PC-3 (cell line): ENCODE measurements at regions of chr5 and their contacts with region 1.

Region 1: GRCh38 chr5:87121304-87122150 is 146.2 kb upstream of the RASA1 start:
- DNase-seq: peak; percentile 96
- ATAC-seq: peak; percentile 80
- H3K4me3 ChIP-seq: peak overlapping the region; percentile 38; the same call in 1 of the 2 replicates
- H3K27ac ChIP-seq: peak overlapping the region; percentile 71
- H3K4me1 ChIP-seq: peaks cover 57% of the 10 kb centered on the region
- H3K27me3 ChIP-seq: no peaks in the 10 kb centered on the region
- CTCF ChIP-seq: no peak

Region 2: GRCh38 chr5:86831128-86831527 is 290.4 kb before region 1 on chr5:
- CTCF ChIA-PET with region 1: no interaction called
- POLR2A ChIA-PET with region 1: no interaction called
- intact Hi-C with region 1: no loop called
- DNase-seq: no peak
- ATAC-seq: no peak
- H3K4me3 ChIP-seq: no peak overlapping the region
- H3K27ac ChIP-seq: no peak overlapping the region
- H3K4me1 ChIP-seq: no peaks in the 10 kb centered on the region
- H3K27me3 ChIP-seq: peaks cover 3% of the 10 kb centered on the region; the same call in 1 of the 2 replicates
- CTCF ChIP-seq: no peak

Region 3: DNA sequence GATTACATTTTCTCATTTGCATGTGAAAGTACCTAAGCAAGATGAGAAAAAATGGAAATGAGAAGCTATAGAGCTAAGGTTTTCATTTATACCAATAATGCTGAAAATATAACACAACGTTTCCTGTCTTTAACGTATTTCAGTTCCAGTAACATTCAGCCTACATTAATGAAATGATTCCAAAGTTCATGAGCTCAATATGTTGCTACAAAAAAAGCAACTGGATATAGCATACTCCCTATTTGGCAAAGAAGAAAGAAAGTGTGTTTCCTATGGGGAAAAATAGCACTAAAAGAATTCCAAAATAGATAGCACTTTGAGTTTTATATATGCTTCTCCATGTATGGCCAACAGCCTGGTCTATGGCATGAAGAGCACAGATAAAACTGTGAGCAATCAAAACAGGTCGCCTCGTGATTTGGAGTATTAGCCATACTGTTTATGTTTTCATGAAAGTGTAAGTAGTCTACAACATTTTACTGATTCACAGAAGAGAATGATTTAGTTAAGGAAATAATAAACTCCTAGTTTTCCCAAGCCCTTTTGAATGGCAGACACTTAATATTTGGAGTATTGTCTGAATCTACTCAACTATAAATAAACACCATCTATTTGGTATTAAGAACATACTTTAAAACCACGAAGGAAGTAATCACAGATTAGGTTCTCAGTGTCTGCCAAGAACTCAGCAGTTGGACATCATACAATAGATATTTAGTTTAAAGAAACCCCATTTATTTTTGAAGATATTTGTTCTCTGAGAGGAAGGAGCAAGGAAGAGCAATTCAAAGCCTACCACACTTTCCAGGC is 112.6 kb before region 1 on chr5:
- CTCF ChIA-PET with region 1: no interaction called
- POLR2A ChIA-PET with region 1: no interaction called
- intact Hi-C with region 1: no loop called
- DNase-seq: no peak
- ATAC-seq: peak; percentile 31
- H3K4me3 ChIP-seq: no peak overlapping the region
- H3K27ac ChIP-seq: no peak overlapping the region
- H3K4me1 ChIP-seq: peaks cover 5% of the 10 kb centered on the region
- H3K27me3 ChIP-seq: no peaks in the 10 kb centered on the region
- CTCF ChIP-seq: no peak

Region 4: GRCh38 chr5:87393331-87393730 is 271.8 kb after region 1 on chr5:
- CTCF ChIA-PET with region 1: no interaction called
- POLR2A ChIA-PET with region 1: no interaction called
- intact Hi-C with region 1: loop called (anchors 5 kb)
- DNase-seq: peak; percentile 84
- ATAC-seq: peak; percentile 75
- H3K4me3 ChIP-seq: peak overlapping the region; percentile 26
- H3K27ac ChIP-seq: peak overlapping the region; percentile 64
- H3K4me1 ChIP-seq: peaks cover 45% of the 10 kb centered on the region
- H3K27me3 ChIP-seq: no peaks in the 10 kb centered on the region
- CTCF ChIP-seq: no peak